ENCODE measurements at regions of chr1 and their contacts with region 1.

Region 1: GRCh38 chr1:158203693-158204457 is 23.2 kb downstream of the CD1D start:
- DNase-seq: peak; percentile 35
- ATAC-seq: peak; percentile 77
- H3K4me3 Mint-ChIP-seq: no peak overlapping the region
- H3K27ac Mint-ChIP-seq: no peak overlapping the region
- H3K4me1 Mint-ChIP-seq: peaks cover 11% of the 10 kb centered on the region
- H3K27me3 Mint-ChIP-seq: peaks cover 25% of the 10 kb centered on the region
- CTCF ChIP-seq: peak; percentile 96

Region 2: GRCh38 chr1:158045639-158046038 is 158.2 kb before region 1 on chr1:
- CTCF ChIA-PET with region 1: no interaction called
- POLR2A ChIA-PET with region 1: no interaction called
- intact Hi-C with region 1: no loop called
- DNase-seq: no peak
- ATAC-seq: no peak
- H3K4me3 Mint-ChIP-seq: no peak overlapping the region
- H3K27ac Mint-ChIP-seq: no peak overlapping the region
- H3K4me1 Mint-ChIP-seq: no peaks in the 10 kb centered on the region
- H3K27me3 Mint-ChIP-seq: no peaks in the 10 kb centered on the region
- CTCF ChIP-seq: no peak

Region 3: DNA sequence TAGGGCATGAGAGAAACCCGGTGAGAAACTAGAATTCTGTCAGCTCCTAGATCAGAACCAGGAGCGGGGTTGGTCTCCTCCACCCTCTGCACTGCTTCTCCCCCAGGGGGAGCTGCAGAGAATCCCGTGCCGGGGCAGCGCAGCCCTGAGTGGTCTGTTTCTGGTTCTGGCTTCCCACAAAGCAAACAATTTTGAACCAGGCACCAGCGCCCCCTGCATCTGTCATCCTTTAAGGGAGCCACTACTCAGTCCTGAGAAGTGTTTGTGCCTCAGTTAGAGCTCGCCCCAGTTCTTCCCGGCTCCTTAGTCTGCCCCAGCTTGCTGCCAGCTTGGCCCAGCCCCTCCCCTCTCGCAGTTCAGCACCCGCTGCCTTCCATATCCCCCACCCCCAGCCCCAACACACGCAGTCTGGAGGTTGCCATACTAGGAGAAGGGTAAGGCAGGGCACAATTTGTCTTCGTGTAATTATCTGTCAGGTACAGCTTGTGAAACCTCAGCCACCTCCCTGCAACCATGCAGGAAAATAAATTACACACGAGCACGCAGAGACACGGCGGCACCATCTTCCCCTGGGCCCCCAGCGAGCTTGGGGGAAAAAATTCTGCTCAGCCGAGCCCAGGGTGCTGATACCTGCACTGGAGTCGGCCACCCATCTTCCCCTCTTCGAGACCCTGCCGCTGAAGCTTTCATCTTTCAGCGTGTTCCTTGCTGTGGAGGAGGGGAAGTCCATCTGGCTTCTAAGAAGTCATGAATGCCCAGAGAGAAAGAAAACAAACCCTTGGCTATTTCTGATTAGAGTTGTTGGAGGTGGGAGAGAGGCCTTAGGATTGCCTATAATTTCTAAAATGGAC is 85.8 kb before region 1 on chr1:
- CTCF ChIA-PET with region 1: no interaction called
- POLR2A ChIA-PET with region 1: no interaction called
- intact Hi-C with region 1: no loop called
- DNase-seq: peak; percentile 67
- ATAC-seq: peak; percentile 75
- H3K4me3 Mint-ChIP-seq: peak overlapping the region; percentile 6
- H3K27ac Mint-ChIP-seq: no peak overlapping the region
- H3K4me1 Mint-ChIP-seq: peaks cover 11% of the 10 kb centered on the region
- H3K27me3 Mint-ChIP-seq: peaks cover 48% of the 10 kb centered on the region
- CTCF ChIP-seq: peak; percentile 59

Region 4: DNA sequence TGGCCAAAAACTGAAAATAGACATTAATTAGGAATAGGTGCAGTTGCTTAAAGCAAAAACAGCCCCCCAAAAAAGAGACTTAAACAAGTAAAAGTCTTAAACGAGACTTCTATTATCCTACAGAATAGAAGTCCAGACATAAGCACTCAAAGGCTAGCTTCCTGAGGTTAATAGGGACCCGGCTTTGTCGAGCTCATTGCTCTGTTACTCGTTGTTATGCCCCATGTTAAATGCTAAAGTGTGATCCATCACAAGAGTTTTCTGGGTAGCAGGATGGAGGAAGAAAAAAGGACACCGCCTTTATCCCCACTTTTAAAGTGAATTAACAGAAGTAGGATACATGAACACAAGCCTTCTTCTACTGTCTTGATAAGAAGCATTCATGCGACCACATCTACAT is 12.6 kb before region 1 on chr1:
- CTCF ChIA-PET with region 1: interaction called, 16 read pairs
- POLR2A ChIA-PET with region 1: no interaction called
- intact Hi-C with region 1: no loop called
- DNase-seq: no peak
- ATAC-seq: no peak
- H3K4me3 Mint-ChIP-seq: no peak overlapping the region
- H3K27ac Mint-ChIP-seq: no peak overlapping the region
- H3K4me1 Mint-ChIP-seq: peaks cover 1% of the 10 kb centered on the region
- H3K27me3 Mint-ChIP-seq: peaks cover 18% of the 10 kb centered on the region
- CTCF ChIP-seq: no peak

Region 5: GRCh38 chr1:158310623-158311022 is 106.7 kb after region 1 on chr1:
- CTCF ChIA-PET with region 1: no interaction called
- POLR2A ChIA-PET with region 1: no interaction called
- intact Hi-C with region 1: no loop called
- DNase-seq: no peak
- ATAC-seq: no peak
- H3K4me3 Mint-ChIP-seq: no peak overlapping the region
- H3K27ac Mint-ChIP-seq: no peak overlapping the region
- H3K4me1 Mint-ChIP-seq: no peaks in the 10 kb centered on the region
- H3K27me3 Mint-ChIP-seq: no peaks in the 10 kb centered on the region
- CTCF ChIP-seq: no peak

Region 6: DNA sequence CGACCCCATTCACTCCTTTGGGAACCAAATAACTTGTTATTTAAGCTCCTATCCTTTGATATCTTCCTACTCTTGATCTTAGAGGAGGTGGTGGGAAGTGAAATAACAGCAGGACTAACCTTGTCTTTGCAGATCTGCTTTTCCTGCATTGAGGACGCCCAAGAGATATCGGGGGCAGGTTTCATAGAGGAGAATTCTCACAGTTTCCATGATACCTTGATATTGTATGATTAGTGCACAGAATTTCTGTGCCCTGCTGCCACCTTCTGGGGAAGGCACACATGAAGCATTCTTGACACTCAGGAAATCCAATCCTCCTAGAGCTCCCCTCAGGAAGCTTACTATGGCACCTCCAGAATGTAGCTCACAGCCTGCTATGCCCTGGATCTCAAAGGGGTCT is 125.9 kb after region 1 on chr1:
- CTCF ChIA-PET with region 1: interaction called, 20 read pairs
- POLR2A ChIA-PET with region 1: no interaction called
- intact Hi-C with region 1: loop called (anchors 1 kb)
- DNase-seq: peak; percentile 46
- ATAC-seq: peak; percentile 39
- H3K4me3 Mint-ChIP-seq: no peak overlapping the region
- H3K27ac Mint-ChIP-seq: no peak overlapping the region
- H3K4me1 Mint-ChIP-seq: peaks cover 6% of the 10 kb centered on the region
- H3K27me3 Mint-ChIP-seq: peaks cover 3% of the 10 kb centered on the region
- CTCF ChIP-seq: no peak

Region 7: DNA sequence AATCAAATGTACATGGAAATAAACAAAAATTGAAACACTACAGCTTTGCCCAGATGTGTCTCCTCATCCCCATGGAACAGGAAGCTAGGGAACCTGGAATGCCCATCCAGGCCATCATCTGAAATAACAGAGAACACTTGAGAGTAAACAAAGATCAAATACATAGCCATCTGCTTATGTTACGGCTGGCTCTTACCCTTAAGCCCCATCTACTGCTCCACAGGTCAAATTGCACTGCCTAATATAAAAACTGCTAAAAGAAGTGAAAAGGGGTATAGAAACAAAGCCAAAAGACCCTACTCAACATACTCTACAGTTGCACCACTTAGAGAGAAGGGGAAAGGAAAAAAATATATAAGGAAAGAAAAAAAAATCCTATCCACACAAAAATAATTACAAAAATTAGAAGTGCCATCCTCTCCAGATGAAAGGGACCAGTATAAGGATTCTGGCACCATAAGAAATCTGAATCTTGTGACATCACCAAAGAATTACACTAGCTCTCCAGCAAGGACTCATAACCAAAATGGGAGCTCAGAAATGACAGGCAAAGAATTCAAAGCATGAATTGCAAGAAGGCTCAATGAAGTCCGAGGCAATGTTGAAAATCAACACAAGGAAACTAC is 323.4 kb after region 1 on chr1:
- CTCF ChIA-PET with region 1: interaction called, 9 read pairs
- POLR2A ChIA-PET with region 1: no interaction called
- intact Hi-C with region 1: loop called (anchors 10 kb)
- DNase-seq: peak; percentile 3
- ATAC-seq: peak; percentile 42
- H3K4me3 Mint-ChIP-seq: no peak overlapping the region
- H3K27ac Mint-ChIP-seq: no peak overlapping the region
- H3K4me1 Mint-ChIP-seq: no peaks in the 10 kb centered on the region
- H3K27me3 Mint-ChIP-seq: peaks cover 14% of the 10 kb centered on the region
- CTCF ChIP-seq: peak; percentile 64

Region 8: GRCh38 chr1:158998781-158999161 is 794.9 kb after region 1 on chr1:
- CTCF ChIA-PET with region 1: interaction called, 13 read pairs
- POLR2A ChIA-PET with region 1: no interaction called
- intact Hi-C with region 1: no loop called
- DNase-seq: peak; percentile 62
- ATAC-seq: peak; percentile 72
- H3K4me3 Mint-ChIP-seq: no peak overlapping the region
- H3K27ac Mint-ChIP-seq: peak overlapping the region; percentile 78
- H3K4me1 Mint-ChIP-seq: peaks cover 25% of the 10 kb centered on the region
- H3K27me3 Mint-ChIP-seq: no peaks in the 10 kb centered on the region
- CTCF ChIP-seq: peak; percentile 86

Region 9: DNA sequence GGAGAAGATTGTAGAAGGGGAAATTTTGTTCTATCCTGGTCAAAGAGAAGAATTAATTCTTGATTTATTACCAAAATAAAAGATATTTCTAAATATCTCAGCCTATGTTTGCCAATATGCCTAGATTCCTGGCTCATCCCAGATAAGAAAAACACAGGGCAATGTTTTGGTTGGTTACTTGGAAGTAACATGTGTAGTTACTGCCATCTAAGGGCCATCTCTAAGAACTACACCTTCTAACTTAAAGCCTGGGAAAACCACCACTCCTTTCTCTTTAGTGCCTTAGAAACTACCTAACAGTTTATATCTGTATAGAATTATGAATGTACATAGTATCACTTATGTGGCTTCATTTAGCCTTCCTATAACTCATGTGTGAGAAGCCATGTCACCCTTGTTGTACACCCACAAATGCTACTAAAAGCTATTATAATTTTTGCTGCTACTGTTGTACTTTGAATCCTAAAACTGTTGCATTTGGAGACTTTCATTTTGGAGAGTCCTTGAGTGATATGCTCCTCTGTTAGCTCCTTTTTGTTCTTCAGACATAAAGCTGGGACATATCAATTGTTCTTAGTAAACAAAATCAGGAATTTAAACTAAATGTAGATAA is 868.2 kb after region 1 on chr1:
- CTCF ChIA-PET with region 1: interaction called, 29 read pairs
- POLR2A ChIA-PET with region 1: no interaction called
- intact Hi-C with region 1: loop called (anchors 10 kb)
- DNase-seq: no peak
- ATAC-seq: no peak
- H3K4me3 Mint-ChIP-seq: no peak overlapping the region
- H3K27ac Mint-ChIP-seq: no peak overlapping the region
- H3K4me1 Mint-ChIP-seq: peaks cover 28% of the 10 kb centered on the region
- H3K27me3 Mint-ChIP-seq: no peaks in the 10 kb centered on the region
- CTCF ChIP-seq: peak; percentile 89

Measured in activated CD8-positive, alpha-beta T cell treated with anti-CD3 and anti-CD28 coated beads for 36 hours (primary cell).